Astrocyte of the cerebellum (primary cell): ENCODE measurements at regions of chr4 and their contacts with region 1.

Region 1: GRCh38 chr4:115376866-115377265 is 263.4 kb upstream of the NDST4 start:
- DNase-seq: no peak
- H3K4me3 ChIP-seq: no peak overlapping the region
- CTCF ChIP-seq: no peak

Region 2: GRCh38 chr4:115310641-115311040 is 66.2 kb before region 1 on chr4:
- in situ Hi-C with region 1: loop called (anchors 10 kb)
- DNase-seq: no peak
- H3K4me3 ChIP-seq: no peak overlapping the region
- CTCF ChIP-seq: no peak